WTC11 (cell line): ENCODE measurements at regions of chr15 and their contacts with region 1.

Region 1: DNA sequence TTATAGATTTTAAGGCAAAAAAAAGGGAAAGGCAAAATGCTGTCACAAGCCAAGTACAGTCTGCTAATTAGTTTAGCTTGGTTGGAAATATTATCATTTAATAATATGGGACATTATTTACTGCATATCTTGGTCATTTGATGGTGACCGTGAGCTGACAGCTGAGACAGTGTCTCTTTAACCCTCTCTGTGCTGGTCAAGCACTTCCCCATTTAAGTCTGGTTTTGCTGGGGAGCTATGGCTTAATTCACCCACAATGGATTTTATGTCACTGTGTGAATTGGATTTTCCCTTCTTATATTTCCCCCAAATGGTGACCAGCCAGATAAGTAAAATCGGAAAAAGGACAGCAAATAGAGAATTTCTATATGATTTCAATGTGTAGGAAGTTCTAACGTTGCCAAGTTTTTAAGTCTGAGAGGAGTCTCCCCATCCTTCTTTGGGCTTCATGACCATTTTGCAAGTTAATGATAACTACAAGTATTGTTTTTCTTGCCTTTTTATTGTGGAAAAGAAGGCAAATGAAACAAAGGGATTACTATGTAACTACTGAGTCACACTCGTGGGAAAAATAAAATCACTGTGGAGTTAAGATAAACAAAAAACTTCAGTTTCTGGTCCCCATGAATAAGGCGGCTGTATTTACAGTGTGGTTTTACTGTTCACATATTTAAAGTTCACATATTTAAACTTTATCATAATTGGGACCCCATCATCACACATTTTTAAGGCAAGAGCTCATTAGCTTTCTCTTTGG is 373.5 kb downstream of the NR2F2 start:
- DNase-seq: no peak
- ATAC-seq: no peak
- H3K4me3 Mint-ChIP-seq: peak overlapping the region; percentile 33
- H3K27ac Mint-ChIP-seq: no peak overlapping the region
- H3K4me1 Mint-ChIP-seq: peaks cover 80% of the 10 kb centered on the region
- H3K27me3 Mint-ChIP-seq: peaks cover 6% of the 10 kb centered on the region
- CTCF ChIP-seq: no peak

Region 2: GRCh38 chr15:96606617-96607016 is 97.4 kb before region 1 on chr15:
- CTCF ChIA-PET with region 1: no interaction called
- POLR2A ChIA-PET with region 1: no interaction called
- DNase-seq: no peak
- ATAC-seq: no peak
- H3K4me3 Mint-ChIP-seq: no peak overlapping the region
- H3K27ac Mint-ChIP-seq: no peak overlapping the region
- H3K4me1 Mint-ChIP-seq: no peaks in the 10 kb centered on the region
- H3K27me3 Mint-ChIP-seq: no peaks in the 10 kb centered on the region
- CTCF ChIP-seq: no peak

Region 3: GRCh38 chr15:96657096-96657495 is 46.9 kb before region 1 on chr15:
- CTCF ChIA-PET with region 1: no interaction called
- POLR2A ChIA-PET with region 1: no interaction called
- DNase-seq: no peak
- ATAC-seq: peak; percentile 55
- H3K4me3 Mint-ChIP-seq: no peak overlapping the region
- H3K27ac Mint-ChIP-seq: no peak overlapping the region
- H3K4me1 Mint-ChIP-seq: 0 out of 2 replicates have a peak, but pooled peaks cover 4% of the 10 kb centered on the region
- H3K27me3 Mint-ChIP-seq: no peaks in the 10 kb centered on the region
- CTCF ChIP-seq: no peak

Region 4: GRCh38 chr15:96687388-96688107 is 16.4 kb before region 1 on chr15:
- CTCF ChIA-PET with region 1: interaction called, 10 read pairs
- POLR2A ChIA-PET with region 1: no interaction called
- DNase-seq: peak; percentile 17
- ATAC-seq: peak; percentile 68
- H3K4me3 Mint-ChIP-seq: no peak overlapping the region
- H3K27ac Mint-ChIP-seq: no peak overlapping the region
- H3K4me1 Mint-ChIP-seq: peaks cover 2% of the 10 kb centered on the region; the same call in 1 of the 2 replicates
- H3K27me3 Mint-ChIP-seq: no peaks in the 10 kb centered on the region
- CTCF ChIP-seq: no peak